Ascending aorta (tissue), 2 donors: ENCODE measurements at regions of chr14 and their contacts with region 1.

Region 1: DNA sequence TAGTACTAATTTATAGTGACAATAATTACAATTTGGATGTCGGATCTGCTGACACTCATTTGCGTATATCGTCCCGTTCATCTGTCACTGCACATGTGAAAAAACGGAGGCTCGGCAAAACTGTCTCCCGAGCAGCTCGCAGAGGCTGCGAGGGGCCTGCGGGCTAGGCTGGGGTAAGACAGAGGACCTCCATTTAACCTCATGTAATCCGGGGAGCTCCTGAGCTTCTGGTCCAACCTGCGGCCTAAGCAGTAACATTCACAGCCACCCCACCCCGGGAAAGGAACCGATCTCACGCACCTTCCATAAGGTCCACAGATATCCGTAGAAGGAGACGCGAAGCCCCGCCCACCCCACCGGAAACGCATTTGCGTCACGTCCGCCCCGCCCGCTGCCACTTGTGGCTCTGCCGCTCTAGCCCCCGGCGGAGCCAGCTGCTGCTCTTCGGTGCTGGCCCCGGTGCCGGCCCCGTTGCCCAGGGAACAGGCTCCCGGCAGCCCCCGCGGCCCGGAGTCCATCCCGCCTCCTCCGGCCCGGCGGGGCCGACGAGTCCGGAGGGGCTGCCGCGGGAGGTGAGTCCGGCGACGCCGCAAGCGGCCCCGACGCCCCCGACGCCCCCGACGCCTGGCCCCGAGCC is at the starts of genes CINP and TECPR2:
- DNase-seq: peak; percentile 90 to 99
- H3K4me3 ChIP-seq: peak within 1 kb of the TSS; percentile 86 to 93
- H3K27ac ChIP-seq: peak within 1 kb of the TSS; percentile 91 to 95
- H3K4me1 ChIP-seq: peaks cover 0 to 16% of the 10 kb centered on the region in 2 donors
- H3K27me3 ChIP-seq: no peaks in the 10 kb centered on the region
- CTCF ChIP-seq: no peak
- total RNA-seq, gene CINP: 6.8 TPM
- total RNA-seq, gene TECPR2: 27.0 TPM

Region 2: DNA sequence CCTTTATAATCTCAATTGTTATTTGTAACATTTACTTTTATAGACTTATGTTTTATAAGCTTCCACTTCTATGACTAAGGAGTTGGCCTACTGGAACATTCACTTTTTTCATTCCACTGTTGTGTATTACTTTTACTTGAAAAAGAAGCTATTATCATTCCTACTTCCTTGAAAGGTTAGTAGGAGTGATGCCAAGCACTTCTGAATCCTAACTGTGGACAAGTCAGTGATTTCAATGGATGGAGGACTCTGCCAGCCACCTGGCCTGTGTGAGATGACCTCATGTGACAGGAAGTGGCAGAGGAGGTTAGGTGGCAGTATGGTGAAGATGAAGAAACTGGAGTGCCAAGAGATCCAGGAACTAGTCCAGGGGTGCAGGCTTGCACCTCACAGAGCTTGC is 46.1 kb after region 1 on chr14:
- intact Hi-C with region 1: loop called (anchors 1 kb)
- DNase-seq: peak in 1 of 2 donors; percentile 75
- H3K4me3 ChIP-seq: no peak overlapping the region
- H3K27ac ChIP-seq: peak overlapping the region; percentile 68 to 90
- H3K4me1 ChIP-seq: peaks cover 0 to 12% of the 10 kb centered on the region in 2 donors
- H3K27me3 ChIP-seq: no peaks in the 10 kb centered on the region
- CTCF ChIP-seq: no peak

Region 3: DNA sequence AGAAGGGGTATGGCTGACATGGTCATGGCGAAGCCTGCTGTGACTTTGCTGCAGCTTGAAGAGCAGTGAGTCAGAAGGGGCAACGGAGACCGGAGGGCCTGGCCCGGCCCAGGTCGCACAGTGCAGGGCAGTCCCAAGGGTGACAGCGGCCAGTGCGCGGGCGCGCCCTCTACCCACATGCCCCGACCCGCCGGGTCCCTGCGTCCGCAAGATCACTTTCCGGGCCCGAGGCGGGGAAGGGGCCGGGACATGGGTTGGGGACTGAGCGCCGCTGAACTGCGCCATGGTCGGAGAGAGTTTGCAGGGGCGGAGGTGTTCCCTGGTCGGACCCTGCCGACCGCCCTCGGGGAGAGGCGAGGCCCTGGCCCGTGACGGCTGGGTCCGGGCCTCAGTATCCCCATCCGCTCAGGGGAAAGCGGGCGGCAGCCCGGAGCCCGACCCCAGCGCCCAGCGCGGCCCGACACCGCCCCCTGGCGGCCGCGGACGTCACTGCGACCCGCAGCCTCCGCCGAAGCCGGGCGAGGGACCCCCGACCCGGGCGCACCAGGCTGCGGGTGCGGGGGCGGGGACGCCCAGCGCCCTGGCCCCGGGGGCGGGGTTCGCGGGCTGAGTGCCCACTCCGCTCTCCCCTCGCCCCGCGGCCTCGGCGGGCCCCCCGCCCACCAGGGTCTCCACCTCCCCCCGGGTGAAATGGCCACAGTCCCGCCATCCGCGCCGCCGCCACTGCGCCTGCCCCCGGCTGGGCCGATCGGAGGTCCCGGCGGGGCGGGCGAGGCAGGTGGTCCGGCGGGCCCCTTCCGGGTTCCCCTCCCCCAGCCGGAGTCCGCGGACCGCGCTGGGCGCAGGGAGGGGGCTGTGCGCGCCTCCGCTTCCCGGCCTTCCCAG is 154.1 kb after region 1 on chr14:
- intact Hi-C with region 1: loop called (anchors 5 kb)
- DNase-seq: no peak
- H3K4me3 ChIP-seq: peak overlapping the region; percentile 77 to 99
- H3K27ac ChIP-seq: peak overlapping the region in 1 of 2 donors; percentile 6
- H3K4me1 ChIP-seq: peaks cover 4 to 7% of the 10 kb centered on the region in 2 donors
- H3K27me3 ChIP-seq: no peaks in the 10 kb centered on the region
- CTCF ChIP-seq: peak; percentile 59 to 99 (median 64)

Region 4: DNA sequence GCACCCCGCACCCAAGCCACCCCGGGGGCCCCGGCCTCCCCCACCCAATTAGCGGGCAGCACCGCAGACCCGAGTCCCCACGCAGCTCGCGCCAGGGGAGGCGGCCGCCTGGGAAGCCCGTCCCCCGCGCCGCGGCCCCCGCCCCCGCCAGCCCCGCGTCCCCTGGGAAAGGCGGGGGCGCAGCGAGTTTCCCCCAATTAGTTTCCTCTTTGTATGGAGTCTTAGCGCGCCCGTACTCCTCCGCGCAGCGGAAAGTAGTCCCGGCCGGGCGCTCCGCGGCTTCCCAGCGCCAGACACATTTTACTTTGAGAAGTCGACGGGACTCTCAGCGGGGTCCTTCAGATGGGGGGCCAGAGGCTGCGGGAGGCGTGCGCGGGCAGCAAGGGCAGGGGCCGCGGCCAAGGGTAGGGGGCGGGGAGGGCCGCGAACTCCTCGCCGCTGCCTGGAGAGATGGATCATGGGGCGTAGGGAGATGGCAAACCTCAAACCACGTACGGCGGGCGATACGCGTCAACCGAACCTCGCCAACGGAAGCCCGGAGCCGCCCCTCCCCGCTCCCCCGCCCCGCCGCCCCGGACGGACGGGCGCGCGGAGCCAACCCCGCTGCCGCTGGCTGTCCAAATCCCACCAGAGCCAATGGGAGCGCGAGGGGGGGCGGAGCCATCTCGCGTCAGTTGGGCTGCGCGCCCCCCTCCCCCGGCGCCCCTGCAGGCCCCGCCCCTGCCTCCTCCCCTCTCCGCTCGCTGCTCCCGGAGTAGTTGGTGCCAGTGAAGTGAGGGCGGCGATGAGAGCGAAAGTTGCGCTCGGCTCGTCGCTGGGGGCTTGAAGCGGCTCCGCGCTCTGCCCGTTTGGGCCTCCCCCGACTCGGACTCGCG is 229.5 kb after region 1 on chr14 and contains the start of gene RCOR1:
- intact Hi-C with region 1: loop called (anchors 2 kb)
- DNase-seq: peak; percentile 93 to 99
- H3K4me3 ChIP-seq: peak within 1 kb of the TSS; percentile 68 to 83
- H3K27ac ChIP-seq: peak within 1 kb of the TSS; percentile 94 to 98
- H3K4me1 ChIP-seq: peaks cover 8 to 12% of the 10 kb centered on the region in 2 donors
- H3K27me3 ChIP-seq: no peaks in the 10 kb centered on the region
- CTCF ChIP-seq: no peak
- total RNA-seq, gene RCOR1: 4.7 TPM